ENCODE measurements at regions of chr17 and their contacts with region 1.

Region 1: DNA sequence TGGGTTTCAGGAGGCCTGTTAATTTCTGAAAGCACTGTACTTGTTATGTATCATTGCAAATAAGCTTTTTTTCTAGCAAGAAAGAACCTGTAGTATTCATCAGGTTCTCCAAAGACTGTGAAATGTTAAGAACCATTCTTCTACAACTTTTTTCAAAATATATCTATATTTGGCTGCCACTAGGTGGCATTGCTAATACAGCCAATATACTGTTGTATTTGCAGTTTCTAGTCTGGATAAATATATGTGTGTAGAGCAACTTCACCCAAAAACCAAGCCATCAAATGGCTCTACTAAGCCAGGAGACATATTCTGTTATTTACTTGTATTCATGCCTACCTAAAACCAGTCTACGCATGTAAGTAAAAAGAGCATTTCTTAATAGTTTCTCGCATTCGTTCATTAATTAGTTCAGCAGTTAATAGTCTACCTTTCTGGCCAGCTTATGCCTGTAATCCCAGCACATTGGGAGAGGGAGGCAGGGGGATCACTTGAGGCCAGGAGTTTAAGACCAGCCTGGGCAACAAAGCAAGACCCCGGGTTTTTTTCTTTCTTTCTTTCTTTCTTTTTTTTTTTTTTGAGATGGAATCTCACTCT is 39.5 kb downstream of the VMP1 start:
- DNase-seq: no peak
- ATAC-seq: peak; percentile 52
- H3K4me3 Mint-ChIP-seq: no peak overlapping the region
- H3K27ac Mint-ChIP-seq: peak overlapping the region; percentile 37
- H3K4me1 Mint-ChIP-seq: peaks cover 20% of the 10 kb centered on the region
- H3K27me3 Mint-ChIP-seq: no peaks in the 10 kb centered on the region

Region 2: GRCh38 chr17:59734226-59734625 is 12.7 kb before region 1 on chr17:
- CTCF ChIA-PET with region 1: interaction called, 12 read pairs
- DNase-seq: no peak
- ATAC-seq: no peak
- H3K4me3 Mint-ChIP-seq: no peak overlapping the region
- H3K27ac Mint-ChIP-seq: no peak overlapping the region
- H3K4me1 Mint-ChIP-seq: peaks cover 7% of the 10 kb centered on the region
- H3K27me3 Mint-ChIP-seq: no peaks in the 10 kb centered on the region

Measured in activated CD8-positive, alpha-beta memory T cell treated with anti-CD3 and anti-CD28 coated beads, Interleukin-2, amount 10 ng/mL, durations not matched to agents 7 days and 5 days (primary cell).